PC-9 (cell line): ENCODE measurements at regions of chr2 and their contacts with region 1.

Region 1: GRCh38 chr2:25951071-25951547 is 31.2 kb downstream of the KIF3C start:
- DNase-seq: peak; percentile 67 to 68
- H3K4me3 ChIP-seq: no peak overlapping the region
- H3K27ac ChIP-seq: no peak overlapping the region
- H3K4me1 ChIP-seq: no peaks in the 10 kb centered on the region
- H3K27me3 ChIP-seq: no peaks in the 10 kb centered on the region
- CTCF ChIP-seq: peak; percentile 99

Region 2: GRCh38 chr2:25851740-25852503 is 99.2 kb before region 1 on chr2:
- CTCF ChIA-PET with region 1: interaction called, 3 read pairs
- POLR2A ChIA-PET with region 1: no interaction called
- intact Hi-C with region 1: loop called (anchors 1 kb)
- DNase-seq: peak; percentile 22 to 75
- H3K4me3 ChIP-seq: no peak overlapping the region
- H3K27ac ChIP-seq: peak overlapping the region; percentile 5; the same call in 1 of the 2 replicates
- H3K4me1 ChIP-seq: peaks cover 11% of the 10 kb centered on the region
- H3K27me3 ChIP-seq: no peaks in the 10 kb centered on the region
- CTCF ChIP-seq: peak; percentile 85

Region 3: GRCh38 chr2:26020231-26020640 is 69.1 kb after region 1 on chr2:
- CTCF ChIA-PET with region 1: no interaction called
- POLR2A ChIA-PET with region 1: no interaction called
- intact Hi-C with region 1: no loop called
- DNase-seq: no peak
- H3K4me3 ChIP-seq: no peak overlapping the region
- H3K27ac ChIP-seq: no peak overlapping the region
- H3K4me1 ChIP-seq: peaks cover 23% of the 10 kb centered on the region
- H3K27me3 ChIP-seq: no peaks in the 10 kb centered on the region
- CTCF ChIP-seq: no peak

Region 4: DNA sequence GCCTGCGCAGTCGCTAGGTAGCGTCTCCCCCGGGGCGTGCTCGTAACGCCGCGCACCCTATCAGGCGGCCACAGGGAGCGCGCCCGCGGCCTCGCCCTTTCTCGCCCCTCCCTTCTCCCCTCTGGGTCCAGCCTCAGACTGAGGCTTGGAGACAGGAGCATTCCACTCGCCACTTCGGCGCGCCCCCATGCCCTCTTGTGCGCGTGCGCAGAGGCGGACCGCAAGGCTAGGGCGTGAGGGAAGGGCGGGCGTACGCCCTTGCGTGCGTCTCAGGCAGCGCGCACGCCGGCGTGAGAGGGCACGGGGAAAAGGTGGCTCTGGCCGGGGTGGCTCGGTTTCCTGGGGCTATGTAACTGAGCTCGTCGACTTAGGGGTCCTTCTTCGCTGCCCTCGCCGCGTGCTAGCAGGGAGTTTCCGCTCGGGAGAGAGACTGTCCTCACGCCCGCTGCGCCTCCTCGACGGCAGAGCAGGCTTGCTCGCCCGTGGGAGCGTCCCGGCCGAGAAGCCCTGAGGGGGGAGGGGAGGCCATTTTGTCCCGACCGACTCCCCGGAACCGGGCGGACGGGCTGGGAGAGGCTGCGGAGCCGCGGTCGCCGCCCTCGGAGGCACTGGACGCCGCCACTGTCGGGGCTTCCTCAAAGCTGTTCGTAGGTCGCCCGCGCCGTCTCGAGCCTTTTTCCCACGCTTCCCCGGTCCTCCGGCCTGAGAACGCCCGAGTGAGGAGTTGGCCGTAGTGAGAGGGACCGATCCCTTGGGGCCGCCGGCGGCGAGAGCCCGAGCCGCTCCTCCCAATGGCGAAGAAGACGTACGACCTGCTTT is 82.9 kb after region 1 on chr2 and contains the start of gene RAB10:
- CTCF ChIA-PET with region 1: interaction called, 11 read pairs
- POLR2A ChIA-PET with region 1: no interaction called
- intact Hi-C with region 1: loop called (anchors 2 kb)
- DNase-seq: peak; percentile 98 to 100
- H3K4me3 ChIP-seq: peak within 1 kb of the TSS; percentile 94
- H3K27ac ChIP-seq: peak within 1 kb of the TSS; percentile 93
- H3K4me1 ChIP-seq: peaks cover 34% of the 10 kb centered on the region
- H3K27me3 ChIP-seq: no peaks in the 10 kb centered on the region
- CTCF ChIP-seq: no peak
- total RNA-seq, gene RAB10: 150 and 171 TPM in 2 replicates

Region 5: GRCh38 chr2:26144953-26145680 is 194.0 kb after region 1 on chr2:
- CTCF ChIA-PET with region 1: interaction called, 5 read pairs
- POLR2A ChIA-PET with region 1: no interaction called
- intact Hi-C with region 1: loop called (anchors 1 kb)
- DNase-seq: peak; percentile 51 to 60
- H3K4me3 ChIP-seq: no peak overlapping the region
- H3K27ac ChIP-seq: no peak overlapping the region
- H3K4me1 ChIP-seq: peaks cover 23% of the 10 kb centered on the region
- H3K27me3 ChIP-seq: no peaks in the 10 kb centered on the region
- CTCF ChIP-seq: peak; percentile 88

Region 6: DNA sequence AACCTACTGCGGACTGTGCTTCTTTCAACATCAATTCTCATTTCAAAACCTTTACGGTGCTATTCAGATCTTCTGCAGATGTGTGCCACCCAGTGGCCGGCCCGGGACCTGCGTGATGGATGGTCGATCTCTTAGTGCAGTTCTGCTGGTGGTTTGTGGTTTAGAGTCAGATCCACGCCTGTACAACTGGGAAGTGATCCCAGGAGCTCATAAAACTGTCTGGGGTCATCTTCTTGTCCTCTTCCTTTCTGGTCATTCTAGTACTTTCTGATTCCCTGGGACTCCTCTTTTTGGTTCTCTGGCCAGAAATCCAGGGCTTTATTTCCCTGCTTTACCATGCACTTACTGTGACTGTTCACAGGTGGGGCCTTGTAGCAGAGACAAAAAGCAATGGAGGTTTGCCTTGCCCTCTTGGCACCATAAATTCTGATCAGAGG is 379.0 kb after region 1 on chr2:
- CTCF ChIA-PET with region 1: no interaction called
- POLR2A ChIA-PET with region 1: no interaction called
- intact Hi-C with region 1: loop called (anchors 1 kb)
- DNase-seq: peak; percentile 70 to 80
- H3K4me3 ChIP-seq: no peak overlapping the region
- H3K27ac ChIP-seq: no peak overlapping the region
- H3K4me1 ChIP-seq: peaks cover 5% of the 10 kb centered on the region; the same call in 1 of the 2 replicates
- H3K27me3 ChIP-seq: no peaks in the 10 kb centered on the region
- CTCF ChIP-seq: peak; percentile 92

Region 7: DNA sequence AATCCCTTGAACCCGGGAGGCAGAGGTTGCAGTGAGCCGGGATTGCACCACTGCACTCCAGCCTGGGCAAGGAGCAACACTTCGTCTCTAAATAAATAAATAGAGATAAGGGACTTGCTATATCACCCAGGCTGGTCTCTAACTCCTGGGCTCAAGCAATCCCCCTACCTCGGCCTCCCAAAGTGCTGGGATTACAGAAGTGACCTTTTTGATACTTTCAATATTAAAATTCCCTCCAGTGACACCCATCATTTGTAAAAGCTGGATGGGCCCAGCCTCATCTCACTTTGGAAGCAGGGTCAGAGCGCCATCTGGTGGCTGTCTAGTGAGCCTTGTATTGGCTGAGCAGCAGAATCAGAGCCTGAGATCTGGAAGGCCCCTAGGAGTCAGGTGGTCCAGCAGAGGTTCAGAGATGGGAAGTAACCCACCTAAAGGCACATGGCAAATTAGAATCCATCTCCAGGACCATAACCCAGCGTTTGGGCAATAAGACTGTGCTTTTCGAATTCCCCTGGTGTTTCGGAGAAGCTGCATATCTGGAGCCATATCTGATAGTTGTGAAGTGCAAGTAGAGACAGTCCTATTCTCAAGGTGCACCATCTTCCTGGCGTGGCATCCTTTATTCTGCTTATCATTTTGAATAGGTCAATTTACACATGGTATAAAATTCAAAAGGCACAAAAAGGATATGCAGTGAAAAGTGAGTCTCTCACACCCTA is 794.7 kb after region 1 on chr2:
- CTCF ChIA-PET with region 1: no interaction called
- POLR2A ChIA-PET with region 1: no interaction called
- intact Hi-C with region 1: loop called (anchors 5 kb)
- DNase-seq: peak; percentile 63 to 71
- H3K4me3 ChIP-seq: no peak overlapping the region
- H3K27ac ChIP-seq: no peak overlapping the region
- H3K4me1 ChIP-seq: no peaks in the 10 kb centered on the region
- H3K27me3 ChIP-seq: no peaks in the 10 kb centered on the region
- CTCF ChIP-seq: peak; percentile 98